ENCODE measurements at regions of chr9 and their contacts with region 1.

Region 1: GRCh38 chr9:105244003-105244733 is at the start of gene SLC44A1:
- DNase-seq: peak; percentile 69 to 96
- ATAC-seq: peak; percentile 94 to 98
- H3K4me3 ChIP-seq: peak within 1 kb of the TSS; percentile 97
- H3K27ac ChIP-seq: peak within 1 kb of the TSS; percentile 93 to 95
- H3K4me1 ChIP-seq: peaks cover 35% of the 10 kb centered on the region
- CTCF ChIP-seq: no peak; the same call in 2 of the 3 replicates
- EP300 ChIP-seq: 0 out of 5 replicates have a peak, but pooled peaks of 1 of the 2 experiments have one; percentile 31
- POLR2A ChIP-seq: peak; percentile 56
- RAD21 ChIP-seq: peak; percentile 23 to 49; a peak in 2 of 5 replicates
- polyA plus RNA-seq, gene SLC44A1: 19.6 and 38.8 TPM in 2 replicates

Region 2: DNA sequence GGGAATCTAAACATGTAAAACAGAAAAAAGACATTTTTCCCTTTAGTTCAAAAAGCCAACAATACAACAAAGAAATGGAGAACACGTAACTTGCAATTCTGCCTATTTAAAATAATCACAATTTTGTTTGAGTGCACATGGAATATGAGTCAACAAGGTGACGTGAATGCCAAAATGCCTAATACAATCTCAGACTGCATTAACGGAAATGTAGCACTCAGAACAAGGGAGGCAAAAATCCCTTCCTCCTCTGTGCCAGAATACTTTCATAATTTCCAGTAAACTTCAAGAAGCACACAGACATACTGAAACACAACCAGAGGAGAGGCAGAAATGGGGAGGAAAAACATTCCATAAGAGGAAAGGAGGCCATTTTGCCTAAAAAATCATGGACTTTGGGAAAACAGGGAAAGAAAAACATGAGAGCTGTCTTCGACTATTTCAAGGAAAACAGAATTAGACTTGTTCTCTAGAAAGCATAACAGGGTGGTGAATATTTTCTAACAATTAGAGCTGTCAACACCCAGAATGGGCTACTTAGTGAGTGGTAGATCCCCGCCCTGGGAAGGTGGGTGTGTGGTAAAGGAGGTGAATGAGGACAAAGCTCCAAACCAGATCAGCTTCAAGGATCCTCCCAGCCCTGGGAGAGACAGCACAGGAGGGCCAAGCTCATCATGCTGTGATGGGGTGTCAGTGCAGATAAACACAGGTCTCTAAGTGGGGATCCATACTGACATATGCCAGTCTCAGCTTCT is 364.4 kb before region 1 on chr9:
- CTCF ChIA-PET with region 1: no interaction called
- POLR2A ChIA-PET with region 1: no interaction called
- DNase-seq: no peak
- ATAC-seq: no peak
- H3K4me3 ChIP-seq: no peak overlapping the region
- H3K27ac ChIP-seq: no peak overlapping the region
- H3K4me1 ChIP-seq: no peaks in the 10 kb centered on the region
- CTCF ChIP-seq: no peak
- EP300 ChIP-seq: no peak
- POLR2A ChIP-seq: no peak
- RAD21 ChIP-seq: no peak

Region 3: DNA sequence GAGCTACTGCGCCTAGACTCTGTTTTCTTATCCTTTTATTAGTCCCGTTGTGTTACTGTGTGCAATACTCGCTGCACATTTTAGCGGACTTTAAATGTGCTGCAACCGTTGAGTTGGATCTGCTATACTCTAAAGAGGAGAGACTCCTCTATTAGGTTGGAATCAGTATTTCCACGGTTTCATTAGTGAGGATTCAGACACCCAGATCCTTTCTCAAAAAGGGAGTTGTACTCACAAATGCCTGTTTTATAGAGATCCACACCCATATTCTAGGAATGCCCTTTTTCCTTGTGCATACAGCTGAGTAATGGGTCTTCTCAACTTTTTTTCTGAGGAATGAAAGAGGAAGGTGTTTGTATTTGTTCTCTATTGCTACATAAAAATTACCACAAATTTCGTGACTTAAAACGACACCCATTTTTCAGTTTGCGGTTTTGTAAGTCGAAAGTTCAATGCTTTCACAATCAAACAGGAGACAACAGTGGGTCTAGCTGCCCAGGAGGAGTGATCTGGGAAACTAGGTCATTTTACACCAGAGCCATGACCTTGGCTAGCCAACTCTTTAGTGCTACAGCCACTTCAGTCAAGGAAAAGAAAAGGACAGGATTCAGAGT is 52.6 kb before region 1 on chr9:
- CTCF ChIA-PET with region 1: interaction called, 4 read pairs
- POLR2A ChIA-PET with region 1: interaction called, 17 read pairs
- DNase-seq: peak; percentile 64 to 89
- ATAC-seq: peak; percentile 74 to 85
- H3K4me3 ChIP-seq: no peak overlapping the region
- H3K27ac ChIP-seq: peak overlapping the region; percentile 82 to 90
- H3K4me1 ChIP-seq: peaks cover 44% of the 10 kb centered on the region
- CTCF ChIP-seq: no peak
- EP300 ChIP-seq: peak; percentile 89 to 90; a peak in 4 of 5 replicates
- POLR2A ChIP-seq: no peak
- RAD21 ChIP-seq: peak; percentile 24 to 58; a peak in 3 of 5 replicates

Region 4: DNA sequence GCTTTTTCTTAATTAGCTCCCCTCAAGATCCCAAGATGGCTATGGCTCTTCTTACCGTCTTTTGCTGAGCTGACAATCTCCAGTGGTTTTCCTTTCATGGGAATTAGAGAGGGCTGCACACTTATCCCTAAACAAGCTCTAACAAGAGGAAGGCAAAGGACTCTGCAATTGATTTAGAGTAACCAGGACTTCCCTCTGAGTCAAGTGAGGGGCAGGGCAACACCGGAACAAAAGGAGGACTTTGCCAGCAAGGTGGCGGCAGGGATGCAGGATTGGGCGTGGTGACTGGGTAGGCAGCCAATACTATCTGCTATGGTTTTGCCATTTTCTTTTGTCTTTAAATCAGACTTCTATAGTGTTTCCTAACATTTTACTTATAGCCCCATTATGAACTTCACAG is 10.1 kb after region 1 on chr9:
- CTCF ChIA-PET with region 1: interaction called, 3 read pairs
- POLR2A ChIA-PET with region 1: interaction called, 15 read pairs
- DNase-seq: no peak
- ATAC-seq: no peak; a peak in 1 of 6 replicates
- H3K4me3 ChIP-seq: no peak overlapping the region
- H3K27ac ChIP-seq: no peak overlapping the region
- H3K4me1 ChIP-seq: peaks cover 28% of the 10 kb centered on the region
- CTCF ChIP-seq: no peak
- EP300 ChIP-seq: no peak
- POLR2A ChIP-seq: no peak
- RAD21 ChIP-seq: no peak

Region 5: GRCh38 chr9:105299190-105299854 is 55.2 kb after region 1 on chr9:
- CTCF ChIA-PET with region 1: interaction called, 10 read pairs
- POLR2A ChIA-PET with region 1: interaction called, 6 read pairs
- DNase-seq: peak; percentile 60 to 84
- ATAC-seq: peak; percentile 91 to 94
- H3K4me3 ChIP-seq: no peak overlapping the region
- H3K27ac ChIP-seq: peak overlapping the region; percentile 75 to 90
- H3K4me1 ChIP-seq: peaks cover 74% of the 10 kb centered on the region
- CTCF ChIP-seq: no peak
- EP300 ChIP-seq: peak in 1 of 2 experiments; percentile 9; a peak in 1 of 5 replicates
- POLR2A ChIP-seq: no peak
- RAD21 ChIP-seq: no peak

Measured in A549 (cell line).